Activated CD8-positive, alpha-beta T cell treated with anti-CD3 and anti-CD28 coated beads for 36 hours (primary cell): ENCODE measurements at regions of chr2 and their contacts with region 1.

Region 1: GRCh38 chr2:84905181-84906107 is at the start of gene TMSB10:
- DNase-seq: peak; percentile 91
- ATAC-seq: peak; percentile 72
- H3K4me3 Mint-ChIP-seq: peak within 1 kb of the TSS; percentile 98
- H3K27ac Mint-ChIP-seq: peak within 1 kb of the TSS; percentile 96
- H3K4me1 Mint-ChIP-seq: peaks cover 59% of the 10 kb centered on the region
- H3K27me3 Mint-ChIP-seq: no peaks in the 10 kb centered on the region
- CTCF ChIP-seq: no peak
- total RNA-seq, gene TMSB10: 2,035 to 2,060 TPM

Region 2: GRCh38 chr2:84719434-84719833 is 186.0 kb before region 1 on chr2:
- CTCF ChIA-PET with region 1: no interaction called
- POLR2A ChIA-PET with region 1: no interaction called
- intact Hi-C with region 1: no loop called
- DNase-seq: no peak
- ATAC-seq: peak; percentile 73
- H3K4me3 Mint-ChIP-seq: peak overlapping the region; percentile 48
- H3K27ac Mint-ChIP-seq: peak overlapping the region; percentile 64
- H3K4me1 Mint-ChIP-seq: peaks cover 31% of the 10 kb centered on the region
- H3K27me3 Mint-ChIP-seq: no peaks in the 10 kb centered on the region
- CTCF ChIP-seq: no peak

Region 3: DNA sequence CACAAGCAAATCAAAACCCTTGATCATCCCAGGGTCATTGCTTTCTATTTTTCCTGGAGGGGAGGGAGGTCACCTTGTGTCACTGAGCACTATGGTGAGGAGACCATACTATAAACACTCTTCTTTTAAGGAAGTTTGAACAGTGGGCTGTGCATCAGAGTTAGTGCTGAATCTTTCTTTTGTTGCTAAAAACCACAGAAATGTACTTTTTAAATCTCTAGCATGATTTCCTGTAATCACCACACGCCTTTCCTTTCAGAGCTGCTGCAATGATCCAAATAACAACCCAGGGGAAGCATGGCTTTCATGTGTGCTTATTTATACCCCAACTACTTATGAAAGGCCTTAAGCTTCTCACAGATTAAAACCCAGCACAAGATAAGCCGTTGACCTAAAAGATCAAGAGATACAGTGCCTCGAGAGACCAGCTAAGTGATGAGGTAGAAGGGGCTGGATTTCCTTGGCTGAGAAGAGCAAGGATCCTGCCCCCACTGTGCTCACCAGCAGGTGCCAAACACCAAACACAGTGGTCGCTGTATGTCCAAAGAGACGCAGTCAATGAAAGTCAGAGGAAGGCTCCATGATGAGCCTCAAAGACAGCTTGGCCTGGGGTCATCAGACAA is 59.3 kb before region 1 on chr2:
- CTCF ChIA-PET with region 1: no interaction called
- POLR2A ChIA-PET with region 1: interaction called, 11 read pairs
- intact Hi-C with region 1: no loop called
- DNase-seq: peak; percentile 57
- ATAC-seq: peak; percentile 51
- H3K4me3 Mint-ChIP-seq: peak overlapping the region; percentile 48
- H3K27ac Mint-ChIP-seq: peak overlapping the region; percentile 97
- H3K4me1 Mint-ChIP-seq: peaks cover 89% of the 10 kb centered on the region
- H3K27me3 Mint-ChIP-seq: no peaks in the 10 kb centered on the region
- CTCF ChIP-seq: no peak

Region 4: DNA sequence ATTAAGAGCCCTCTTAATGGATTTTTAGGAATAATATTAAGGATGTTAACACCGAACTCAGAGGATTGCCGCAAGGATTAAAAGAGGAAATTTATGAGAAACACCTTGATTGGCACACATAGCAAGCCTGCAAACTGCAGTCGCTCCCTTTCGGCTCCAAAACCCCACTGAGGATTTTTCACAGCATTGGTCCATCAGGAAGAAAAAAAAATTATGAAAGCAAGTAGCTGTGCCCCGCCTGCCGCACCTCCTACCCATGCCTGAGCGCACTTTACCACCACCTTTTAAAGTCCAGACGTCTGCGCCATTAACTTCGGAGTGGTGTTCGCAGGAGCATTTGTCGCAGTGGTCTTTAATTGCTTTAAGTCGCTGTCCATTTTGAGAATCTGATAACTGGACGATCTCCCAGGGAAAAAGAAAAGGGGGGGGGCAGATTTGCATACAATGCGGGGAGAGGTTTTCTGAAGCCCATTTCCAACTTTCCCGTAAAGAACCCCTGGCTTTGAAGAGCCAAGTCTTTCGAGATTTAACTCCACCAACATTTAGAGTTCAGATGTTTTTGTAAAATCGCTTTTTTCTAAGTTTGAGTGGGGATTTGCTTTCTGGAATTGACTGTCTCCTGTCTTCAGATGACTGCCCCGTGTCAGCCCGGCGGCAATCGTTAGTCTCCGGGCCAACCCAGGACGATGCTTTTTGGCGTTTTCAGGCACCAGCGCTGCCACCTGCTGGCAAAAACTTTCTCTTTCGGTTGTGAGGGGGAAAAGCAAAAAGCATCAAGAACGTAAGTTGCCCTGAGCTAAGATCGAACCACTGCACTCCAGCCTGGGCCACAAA is 23.6 kb before region 1 on chr2:
- CTCF ChIA-PET with region 1: interaction called, 5 read pairs
- POLR2A ChIA-PET with region 1: interaction called, 56 read pairs
- intact Hi-C with region 1: no loop called
- DNase-seq: peak; percentile 95
- ATAC-seq: peak; percentile 73
- H3K4me3 Mint-ChIP-seq: peak overlapping the region; percentile 96
- H3K27ac Mint-ChIP-seq: peak overlapping the region; percentile 94
- H3K4me1 Mint-ChIP-seq: peaks cover 56% of the 10 kb centered on the region
- H3K27me3 Mint-ChIP-seq: no peaks in the 10 kb centered on the region
- CTCF ChIP-seq: peak; percentile 72

Region 5: DNA sequence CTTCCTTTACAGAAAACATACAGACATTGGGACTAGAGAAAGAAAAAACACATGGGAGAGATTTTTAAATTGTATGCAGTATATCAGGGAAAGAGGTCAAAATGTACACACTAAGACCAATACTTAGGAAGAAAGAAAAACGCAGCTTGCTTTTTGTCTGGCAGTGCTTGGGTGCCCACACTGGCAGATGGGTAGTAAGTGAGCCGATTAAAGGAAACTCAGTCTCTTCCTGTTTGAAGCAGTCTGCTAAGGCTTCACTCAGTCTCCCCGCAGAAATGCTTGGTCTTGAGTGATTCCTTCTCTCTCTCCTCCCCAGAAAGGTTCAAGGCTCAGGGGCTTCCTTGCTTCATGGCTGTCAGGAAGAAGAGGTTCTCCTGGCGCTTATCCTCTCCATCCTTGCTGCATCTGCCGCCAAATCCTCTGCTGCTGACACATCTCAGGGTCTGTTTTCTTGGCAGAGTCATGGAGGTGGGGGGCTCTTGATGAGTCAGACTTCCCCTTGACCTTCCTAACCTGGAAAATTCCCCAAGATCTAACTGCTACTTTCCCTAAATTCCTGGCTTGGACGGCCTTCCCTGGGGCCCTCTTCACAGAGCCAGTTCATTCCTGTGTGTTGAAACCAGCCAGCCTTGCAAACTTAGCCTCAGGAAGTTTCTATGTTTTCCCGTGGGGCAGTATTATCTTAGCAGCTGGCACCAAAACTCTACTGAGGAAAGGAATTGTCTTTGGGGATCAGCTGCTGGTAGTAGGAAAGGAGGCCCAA is 10.5 kb before region 1 on chr2:
- CTCF ChIA-PET with region 1: interaction called, 8 read pairs
- POLR2A ChIA-PET with region 1: interaction called, 55 read pairs
- intact Hi-C with region 1: no loop called
- DNase-seq: peak; percentile 40
- ATAC-seq: peak; percentile 22
- H3K4me3 Mint-ChIP-seq: peak overlapping the region; percentile 27
- H3K27ac Mint-ChIP-seq: peak overlapping the region; percentile 77
- H3K4me1 Mint-ChIP-seq: peaks cover 57% of the 10 kb centered on the region
- H3K27me3 Mint-ChIP-seq: no peaks in the 10 kb centered on the region
- CTCF ChIP-seq: no peak

Region 6: GRCh38 chr2:84939426-84940087 is 34.1 kb after region 1 on chr2:
- CTCF ChIA-PET with region 1: interaction called, 3 read pairs
- POLR2A ChIA-PET with region 1: interaction called, 16 read pairs
- intact Hi-C with region 1: no loop called
- DNase-seq: peak; percentile 92
- ATAC-seq: peak; percentile 84
- H3K4me3 Mint-ChIP-seq: peak overlapping the region; percentile 63
- H3K27ac Mint-ChIP-seq: peak overlapping the region; percentile 94
- H3K4me1 Mint-ChIP-seq: peaks cover 67% of the 10 kb centered on the region
- H3K27me3 Mint-ChIP-seq: no peaks in the 10 kb centered on the region
- CTCF ChIP-seq: no peak

Region 7: GRCh38 chr2:84954329-84954728 is 48.9 kb after region 1 on chr2:
- CTCF ChIA-PET with region 1: no interaction called
- POLR2A ChIA-PET with region 1: no interaction called
- intact Hi-C with region 1: no loop called
- DNase-seq: no peak
- ATAC-seq: no peak
- H3K4me3 Mint-ChIP-seq: no peak overlapping the region
- H3K27ac Mint-ChIP-seq: no peak overlapping the region
- H3K4me1 Mint-ChIP-seq: peaks cover 9% of the 10 kb centered on the region
- H3K27me3 Mint-ChIP-seq: no peaks in the 10 kb centered on the region
- CTCF ChIP-seq: no peak